Activated CD4-positive, alpha-beta T cell treated with anti-CD3 and anti-CD28 coated beads for 36 hours (primary cell): ENCODE measurements at regions of chr2 and their contacts with region 1.

Region 1: DNA sequence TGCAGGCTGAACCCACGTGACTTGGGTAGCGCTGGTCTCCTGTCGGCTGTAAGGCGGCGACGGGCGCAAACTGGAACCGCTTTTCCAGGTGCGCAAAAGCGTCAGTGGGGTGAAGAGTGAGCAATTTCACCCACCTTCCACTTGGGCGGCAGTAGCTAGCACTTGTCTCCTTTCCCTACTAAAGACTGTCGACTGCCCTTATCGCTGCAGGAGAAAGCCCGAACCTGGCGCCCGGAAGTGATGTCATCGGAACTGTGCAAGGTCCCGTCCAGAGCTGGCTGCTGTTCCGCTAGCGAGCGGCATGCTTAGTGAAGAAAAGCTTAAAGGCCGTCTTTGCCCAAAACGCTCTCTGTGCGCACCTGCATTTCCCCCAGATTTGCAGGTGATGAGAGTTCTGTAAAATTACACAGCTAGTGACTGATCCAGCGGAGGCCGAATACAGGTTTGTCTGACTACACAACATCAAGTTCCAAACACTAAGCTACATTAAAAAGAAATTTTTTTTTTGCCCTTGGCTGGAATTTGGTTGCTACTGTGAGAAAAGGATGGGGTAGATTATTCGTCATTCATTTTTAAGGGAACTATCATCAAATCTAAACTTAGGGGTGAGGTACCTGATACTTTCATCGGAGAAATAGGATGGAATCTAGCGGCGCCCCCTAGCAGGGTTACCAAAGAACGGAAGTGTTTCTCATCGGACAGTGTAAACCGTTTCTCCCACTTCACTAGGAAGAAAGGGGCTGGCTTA is at the start of gene OSGEPL1:
- DNase-seq: peak; percentile 96
- ATAC-seq: peak; percentile 97
- H3K4me3 Mint-ChIP-seq: peak within 1 kb of the TSS; percentile 89
- H3K27ac Mint-ChIP-seq: peak within 1 kb of the TSS; percentile 96
- H3K4me1 Mint-ChIP-seq: peaks cover 15% of the 10 kb centered on the region
- H3K27me3 Mint-ChIP-seq: no peaks in the 10 kb centered on the region
- total RNA-seq, gene OSGEPL1: 9.8 to 11.6 TPM

Region 2: DNA sequence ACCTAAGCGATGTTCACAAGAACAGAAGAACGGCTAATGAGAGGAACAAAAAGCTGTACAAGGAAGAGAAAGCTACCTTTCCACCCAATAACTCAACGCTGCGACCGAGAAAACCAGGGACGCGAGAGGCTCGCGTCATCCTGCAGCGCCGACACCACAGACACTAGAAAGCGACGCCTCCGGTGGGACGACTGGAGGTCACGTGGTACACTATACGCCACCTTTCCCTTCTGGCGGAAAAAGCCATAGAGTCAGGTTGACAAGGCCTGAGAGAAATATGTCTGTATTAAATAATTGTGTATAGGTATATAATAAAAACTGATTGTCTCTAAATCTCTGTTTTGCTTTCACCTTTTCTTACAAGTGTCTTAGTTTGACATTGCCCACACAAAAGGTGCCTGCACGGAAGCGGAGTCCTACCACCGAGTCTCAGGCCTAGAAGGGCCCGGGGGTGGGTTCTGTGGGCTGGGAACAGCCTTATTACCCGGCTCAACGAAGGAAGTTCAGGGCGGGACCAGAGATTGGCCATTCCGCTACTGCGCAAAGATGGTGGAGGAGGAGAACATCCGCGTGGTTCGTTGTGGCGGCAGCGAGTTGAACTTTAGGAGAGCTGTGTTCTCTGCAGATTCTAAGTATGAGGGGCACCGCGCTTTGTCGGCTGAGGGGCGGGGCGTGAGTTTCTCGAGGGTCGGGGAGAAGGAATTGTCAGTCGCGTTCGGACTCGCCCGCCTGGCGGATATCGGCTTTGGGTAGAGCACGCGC is 321.6 kb before region 1 on chr2 and contains the start of gene WDR75:
- CTCF ChIA-PET with region 1: interaction called, 3 read pairs
- POLR2A ChIA-PET with region 1: no interaction called
- intact Hi-C with region 1: loop called in 1 of 2 experiments (anchors 1 kb)
- DNase-seq: peak; percentile 95
- ATAC-seq: peak; percentile 91
- H3K4me3 Mint-ChIP-seq: no peak within 1 kb of the TSS
- H3K27ac Mint-ChIP-seq: peak within 1 kb of the TSS; percentile 99
- H3K4me1 Mint-ChIP-seq: peaks cover 20% of the 10 kb centered on the region
- H3K27me3 Mint-ChIP-seq: no peaks in the 10 kb centered on the region
- total RNA-seq, gene WDR75: 82.1 to 82.3 TPM

Region 3: GRCh38 chr2:189729430-189729829 is 33.3 kb before region 1 on chr2:
- CTCF ChIA-PET with region 1: no interaction called
- POLR2A ChIA-PET with region 1: no interaction called
- intact Hi-C with region 1: no loop called
- DNase-seq: no peak
- ATAC-seq: no peak
- H3K4me3 Mint-ChIP-seq: no peak overlapping the region
- H3K27ac Mint-ChIP-seq: no peak overlapping the region
- H3K4me1 Mint-ChIP-seq: no peaks in the 10 kb centered on the region
- H3K27me3 Mint-ChIP-seq: no peaks in the 10 kb centered on the region

Region 4: GRCh38 chr2:189751080-189751658 is 11.6 kb before region 1 on chr2:
- CTCF ChIA-PET with region 1: interaction called, 53 read pairs
- POLR2A ChIA-PET with region 1: no interaction called
- intact Hi-C with region 1: no loop called
- DNase-seq: peak; percentile 57
- ATAC-seq: peak; percentile 71
- H3K4me3 Mint-ChIP-seq: no peak overlapping the region
- H3K27ac Mint-ChIP-seq: no peak overlapping the region
- H3K4me1 Mint-ChIP-seq: no peaks in the 10 kb centered on the region
- H3K27me3 Mint-ChIP-seq: no peaks in the 10 kb centered on the region

Region 5: GRCh38 chr2:189791338-189792042 is 28.8 kb after region 1 on chr2:
- CTCF ChIA-PET with region 1: interaction called, 14 read pairs
- POLR2A ChIA-PET with region 1: no interaction called
- intact Hi-C with region 1: no loop called
- DNase-seq: no peak
- ATAC-seq: no peak
- H3K4me3 Mint-ChIP-seq: no peak overlapping the region
- H3K27ac Mint-ChIP-seq: peak overlapping the region; percentile 43
- H3K4me1 Mint-ChIP-seq: peaks cover 12% of the 10 kb centered on the region
- H3K27me3 Mint-ChIP-seq: no peaks in the 10 kb centered on the region

Region 6: GRCh38 chr2:190319555-190320498 is 557.1 kb after region 1 on chr2 and contains the start of gene HIBCH:
- CTCF ChIA-PET with region 1: no interaction called
- POLR2A ChIA-PET with region 1: no interaction called
- intact Hi-C with region 1: loop called in 1 of 2 experiments (anchors 5 kb)
- DNase-seq: peak; percentile 95
- ATAC-seq: peak; percentile 87
- H3K4me3 Mint-ChIP-seq: peak within 1 kb of the TSS; percentile 85
- H3K27ac Mint-ChIP-seq: peak within 1 kb of the TSS; percentile 93
- H3K4me1 Mint-ChIP-seq: peaks cover 59% of the 10 kb centered on the region
- H3K27me3 Mint-ChIP-seq: no peaks in the 10 kb centered on the region
- total RNA-seq, gene HIBCH: 23.1 to 23.7 TPM